ENCODE measurements at regions of chr20 and their contacts with region 1.

Region 1: DNA sequence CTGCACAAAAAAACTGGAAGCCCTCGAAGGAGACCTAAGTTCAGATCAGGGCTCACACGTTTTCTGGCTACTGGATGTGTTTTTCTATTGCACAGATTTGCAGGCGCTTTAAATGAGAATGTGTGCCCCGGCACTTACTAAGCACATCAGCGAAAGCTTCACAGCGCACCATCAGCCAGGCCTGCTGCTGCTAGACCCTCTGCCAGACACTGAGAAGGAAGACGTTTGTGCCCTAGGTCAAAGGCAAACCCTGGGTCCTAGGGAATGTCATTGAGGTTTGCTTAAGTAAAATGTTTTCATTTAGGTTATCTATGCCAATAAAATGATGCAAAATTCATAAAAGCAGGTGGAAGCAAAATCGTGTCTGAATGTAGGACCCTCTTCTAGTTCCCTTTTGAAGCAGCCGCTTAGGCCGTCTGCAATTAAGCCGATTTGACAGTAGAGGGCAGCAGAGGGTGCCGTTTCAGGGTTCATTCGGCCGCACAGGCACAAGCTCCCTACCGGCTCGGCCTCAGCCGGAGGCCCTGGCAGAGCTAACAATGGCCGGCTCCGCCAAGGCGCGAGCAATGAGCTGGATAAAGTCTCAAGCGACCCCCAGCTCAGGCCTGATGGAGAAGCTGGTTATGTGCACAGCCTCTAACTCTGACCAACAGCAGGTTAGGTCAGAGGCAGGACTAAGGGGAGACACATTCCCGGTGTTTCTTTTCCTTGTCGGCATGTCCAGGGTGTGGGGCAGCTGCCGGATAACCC is 107.2 kb upstream of the FOXA2 start:
- DNase-seq: peak; percentile 85 to 89
- ATAC-seq: peak; percentile 93 to 97
- H3K4me3 ChIP-seq: no peak overlapping the region; the same call in 2 of the 3 replicates
- H3K27ac ChIP-seq: peak overlapping the region; percentile 83 to 90
- H3K4me1 ChIP-seq: peaks cover 23% of the 10 kb centered on the region
- CTCF ChIP-seq: peak; percentile 97
- EP300 ChIP-seq: no peak
- POLR2A ChIP-seq: no peak
- RAD21 ChIP-seq: peak; percentile 99 to 100

Region 2: DNA sequence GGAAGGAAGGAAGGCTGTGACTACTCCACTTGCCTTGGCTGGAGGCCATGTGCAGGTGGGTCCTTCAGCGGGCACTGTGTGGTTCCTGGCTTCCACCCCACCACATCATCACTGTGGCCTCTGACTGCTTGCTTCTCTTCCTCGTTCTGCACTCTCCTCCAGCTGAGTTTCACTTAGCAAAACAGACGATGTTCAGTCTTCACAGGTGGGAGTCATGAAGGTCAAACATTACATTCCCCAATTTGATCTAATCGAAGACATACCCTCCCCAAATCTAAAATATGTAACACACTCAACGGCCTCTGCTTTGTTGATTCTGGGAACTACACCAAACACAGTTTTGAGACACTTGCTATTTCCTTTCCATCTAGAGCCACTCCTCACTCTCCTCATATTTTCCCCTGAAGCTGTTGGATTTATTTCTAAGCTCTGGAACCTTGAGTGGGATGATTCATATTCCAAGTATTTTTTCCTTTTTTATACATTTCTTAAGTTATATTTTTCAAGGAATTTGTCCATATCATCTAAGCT is 25.3 kb after region 1 on chr20:
- CTCF ChIA-PET with region 1: interaction called, 355 read pairs
- POLR2A ChIA-PET with region 1: interaction called, 5 read pairs
- DNase-seq: peak; percentile 34 to 56
- ATAC-seq: peak; percentile 70 to 77
- H3K4me3 ChIP-seq: no peak overlapping the region
- H3K27ac ChIP-seq: peak overlapping the region; percentile 80 to 85
- H3K4me1 ChIP-seq: peaks cover 50% of the 10 kb centered on the region
- CTCF ChIP-seq: no peak
- EP300 ChIP-seq: no peak; a peak in 1 of 5 replicates
- POLR2A ChIP-seq: no peak
- RAD21 ChIP-seq: 0 out of 5 replicates have a peak, but pooled peaks of 1 of the 2 experiments have one; percentile 7

Region 3: GRCh38 chr20:22768266-22769178 is 77.0 kb after region 1 on chr20:
- CTCF ChIA-PET with region 1: interaction called, 78 read pairs
- POLR2A ChIA-PET with region 1: interaction called, 3 read pairs
- DNase-seq: peak in 1 of 2 experiments; percentile 76
- ATAC-seq: peak; percentile 63 to 77; a peak in 5 of 6 replicates
- H3K4me3 ChIP-seq: no peak overlapping the region
- H3K27ac ChIP-seq: peak overlapping the region; percentile 92 to 98
- H3K4me1 ChIP-seq: peaks cover 61% of the 10 kb centered on the region
- CTCF ChIP-seq: no peak
- EP300 ChIP-seq: peak; percentile 30 to 61; a peak in 2 of 5 replicates
- POLR2A ChIP-seq: no peak
- RAD21 ChIP-seq: no peak; a peak in 1 of 5 replicates

Region 4: DNA sequence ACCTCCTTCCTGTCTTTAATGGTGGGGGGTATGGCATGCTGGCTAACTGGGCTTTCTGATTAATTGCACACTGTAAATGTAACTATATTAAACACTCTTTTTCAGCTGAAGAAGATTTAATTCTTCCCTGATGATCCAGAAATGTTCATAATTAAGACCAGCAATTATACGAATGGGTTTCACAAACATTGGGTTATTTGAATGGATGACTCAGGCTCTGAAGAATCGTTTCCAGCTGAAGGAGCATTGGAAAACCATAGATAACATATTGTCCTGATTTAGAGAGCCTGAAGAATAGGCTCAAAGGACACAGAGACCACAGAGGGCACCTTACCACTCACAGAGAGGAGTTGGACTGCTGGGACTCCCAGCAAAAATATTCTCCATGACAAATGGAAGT is 212.8 kb after region 1 on chr20:
- CTCF ChIA-PET with region 1: interaction called, 18 read pairs
- POLR2A ChIA-PET with region 1: no interaction called
- DNase-seq: no peak
- ATAC-seq: no peak
- H3K4me3 ChIP-seq: no peak overlapping the region
- H3K27ac ChIP-seq: no peak overlapping the region
- H3K4me1 ChIP-seq: no peaks in the 10 kb centered on the region
- CTCF ChIP-seq: no peak
- EP300 ChIP-seq: no peak
- POLR2A ChIP-seq: no peak
- RAD21 ChIP-seq: no peak

Region 5: GRCh38 chr20:22942742-22943141 is 251.2 kb after region 1 on chr20:
- CTCF ChIA-PET with region 1: no interaction called
- POLR2A ChIA-PET with region 1: no interaction called
- DNase-seq: no peak
- ATAC-seq: no peak
- H3K4me3 ChIP-seq: no peak overlapping the region
- H3K27ac ChIP-seq: no peak overlapping the region; a peak in 1 of 6 replicates
- H3K4me1 ChIP-seq: peaks cover 21% of the 10 kb centered on the region; the same call in 2 of the 3 replicates
- CTCF ChIP-seq: no peak
- EP300 ChIP-seq: no peak
- POLR2A ChIP-seq: no peak
- RAD21 ChIP-seq: no peak

Region 6: DNA sequence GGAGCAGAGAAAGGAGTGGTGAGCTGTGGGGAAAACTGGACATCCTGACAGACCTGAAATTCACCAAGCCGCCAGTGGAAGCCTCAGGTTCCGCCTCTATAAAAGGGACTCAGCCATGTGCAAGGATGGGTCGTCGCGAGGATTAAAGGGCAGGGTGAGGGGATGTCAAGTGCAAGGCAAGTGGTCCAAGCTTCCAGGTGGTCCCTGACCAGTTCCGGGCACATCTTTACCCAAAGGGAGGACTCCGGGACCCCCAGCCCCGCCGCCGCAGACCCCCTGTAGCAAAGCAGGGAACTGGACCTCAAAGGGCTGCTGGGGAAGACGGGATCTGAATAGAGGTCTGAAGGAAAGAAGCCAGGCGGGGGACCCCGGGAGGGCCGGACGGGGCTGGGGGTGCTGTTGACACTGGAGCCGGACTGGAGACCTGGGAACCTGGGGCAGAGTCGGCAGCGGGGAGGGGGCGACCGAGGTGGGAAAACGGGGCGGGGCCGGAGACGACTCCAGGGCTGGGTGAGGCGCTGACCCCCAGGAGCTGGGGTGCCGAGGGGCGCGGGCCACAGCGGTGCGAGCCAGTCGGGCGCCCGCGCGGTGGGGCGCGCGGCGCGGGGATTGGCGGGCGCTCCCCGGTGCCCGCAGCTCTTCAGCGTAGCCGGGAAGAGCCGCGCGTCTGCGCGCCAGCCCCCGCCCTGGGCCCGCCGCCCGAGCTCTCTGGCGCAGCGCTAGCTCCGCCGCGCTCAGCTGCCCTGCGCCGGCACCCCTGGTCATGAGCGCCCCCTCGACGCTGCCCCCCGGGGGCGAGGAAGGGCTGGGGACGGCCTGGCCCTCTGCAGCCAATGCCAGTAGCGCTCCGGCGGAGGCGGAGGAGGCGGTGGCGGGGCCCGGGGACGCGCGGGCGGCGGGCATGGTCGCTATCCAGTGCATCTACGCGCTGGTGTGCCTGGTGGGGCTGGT is 343.5 kb after region 1 on chr20 and contains the start of gene SSTR4:
- CTCF ChIA-PET with region 1: interaction called, 10 read pairs
- POLR2A ChIA-PET with region 1: no interaction called
- DNase-seq: no peak
- ATAC-seq: peak; percentile 7 to 41; a peak in 1 of 6 replicates
- H3K4me3 ChIP-seq: peak within 1 kb of the TSS; percentile 33
- H3K27ac ChIP-seq: peak within 1 kb of the TSS; percentile 51 to 71; a peak in 5 of 6 replicates
- H3K4me1 ChIP-seq: peaks cover 9% of the 10 kb centered on the region; the same call in 2 of the 3 replicates
- CTCF ChIP-seq: no peak
- EP300 ChIP-seq: no peak
- POLR2A ChIP-seq: no peak
- RAD21 ChIP-seq: no peak
- polyA plus RNA-seq, gene SSTR4: 0.07 TPM in 1 of 2 replicates, not detected in the other

Region 7: GRCh38 chr20:23235173-23236027 is 543.9 kb after region 1 on chr20:
- CTCF ChIA-PET with region 1: interaction called, 18 read pairs
- POLR2A ChIA-PET with region 1: no interaction called
- DNase-seq: peak; percentile 47 to 78
- ATAC-seq: peak; percentile 73 to 94; a peak in 5 of 6 replicates
- H3K4me3 ChIP-seq: no peak overlapping the region
- H3K27ac ChIP-seq: no peak overlapping the region
- H3K4me1 ChIP-seq: peaks cover 2% of the 10 kb centered on the region; the same call in 1 of the 3 replicates
- CTCF ChIP-seq: peak; percentile 53
- EP300 ChIP-seq: no peak
- POLR2A ChIP-seq: no peak
- RAD21 ChIP-seq: peak; percentile 52 to 71; a peak in 4 of 5 replicates